ENCODE measurements at regions of chr1 and their contacts with region 1.

Region 1: DNA sequence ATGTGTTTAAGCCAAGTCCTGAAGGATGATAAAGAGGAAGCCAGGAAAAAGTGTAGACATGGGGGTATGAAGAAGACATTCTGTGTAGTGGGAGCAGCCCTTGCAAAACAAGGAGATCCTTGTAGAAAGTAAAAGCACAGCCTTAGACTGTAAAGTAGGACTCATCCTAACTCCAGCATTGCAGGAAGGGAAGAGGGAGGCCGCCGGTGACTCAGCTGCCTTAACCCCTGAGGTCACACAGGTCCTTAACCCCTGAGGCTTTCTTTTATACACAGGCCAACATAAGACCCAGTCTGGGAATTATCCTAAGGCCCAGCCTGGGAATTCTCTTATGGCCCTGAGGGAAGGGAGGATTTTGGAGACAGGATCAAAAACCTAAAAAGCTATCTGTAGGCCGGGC is 18.0 kb downstream of the PGM1 start:
- DNase-seq: peak in 4 of 7 donors; percentile 35 to 65 (median 50)
- H3K4me3 ChIP-seq: no peak overlapping the region
- H3K27ac ChIP-seq: no peak overlapping the region
- H3K4me1 ChIP-seq: peaks cover 6 to 13% of the 10 kb centered on the region in 2 donors
- H3K27me3 ChIP-seq: no peaks in the 10 kb centered on the region
- CTCF ChIP-seq: no peak
- POLR2A ChIP-seq: no peak

Region 2: GRCh38 chr1:64251971-64252370 is 640.7 kb after region 1 on chr1:
- intact Hi-C with region 1: loop called in 1 of 2 experiments (anchors 2 kb)
- DNase-seq: no peak
- H3K4me3 ChIP-seq: no peak overlapping the region
- H3K27ac ChIP-seq: no peak overlapping the region
- H3K4me1 ChIP-seq: no peaks in the 10 kb centered on the region
- H3K27me3 ChIP-seq: peaks cover 6% of the 10 kb centered on the region
- CTCF ChIP-seq: no peak
- POLR2A ChIP-seq: no peak

Region 3: DNA sequence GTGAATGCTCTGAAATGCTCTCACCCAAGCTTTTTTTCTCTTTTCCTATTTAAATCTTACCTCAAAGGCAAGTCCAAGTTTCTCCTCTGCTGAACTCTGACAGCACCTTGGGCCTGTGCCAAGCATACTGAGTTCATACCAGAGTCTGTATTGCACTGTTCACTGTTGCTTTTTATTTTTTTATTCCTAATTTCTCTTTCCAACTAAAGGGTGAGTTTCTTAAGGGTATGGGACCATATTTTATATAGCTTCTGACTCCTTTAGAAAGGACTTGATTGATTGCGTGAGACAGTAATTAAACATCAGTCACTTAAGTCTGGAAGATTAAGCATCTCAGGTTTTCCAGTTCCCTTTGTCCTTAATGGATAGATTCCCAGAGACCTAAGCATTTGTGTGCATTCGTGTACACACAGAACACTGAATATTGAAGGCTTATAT is 928.6 kb after region 1 on chr1:
- intact Hi-C with region 1: no loop called
- DNase-seq: peak; percentile 79 to 95 (median 91)
- H3K4me3 ChIP-seq: peak overlapping the region in 1 of 4 donors; percentile 33
- H3K27ac ChIP-seq: peak overlapping the region in 4 of 5 donors; percentile 3 to 61 (median 42)
- H3K4me1 ChIP-seq: peaks cover 10 to 48% of the 10 kb centered on the region in 2 donors
- H3K27me3 ChIP-seq: no peaks in the 10 kb centered on the region
- CTCF ChIP-seq: no peak
- POLR2A ChIP-seq: no peak